WTC11 (cell line): ENCODE measurements at regions of chr5 and their contacts with region 1.

Region 1: DNA sequence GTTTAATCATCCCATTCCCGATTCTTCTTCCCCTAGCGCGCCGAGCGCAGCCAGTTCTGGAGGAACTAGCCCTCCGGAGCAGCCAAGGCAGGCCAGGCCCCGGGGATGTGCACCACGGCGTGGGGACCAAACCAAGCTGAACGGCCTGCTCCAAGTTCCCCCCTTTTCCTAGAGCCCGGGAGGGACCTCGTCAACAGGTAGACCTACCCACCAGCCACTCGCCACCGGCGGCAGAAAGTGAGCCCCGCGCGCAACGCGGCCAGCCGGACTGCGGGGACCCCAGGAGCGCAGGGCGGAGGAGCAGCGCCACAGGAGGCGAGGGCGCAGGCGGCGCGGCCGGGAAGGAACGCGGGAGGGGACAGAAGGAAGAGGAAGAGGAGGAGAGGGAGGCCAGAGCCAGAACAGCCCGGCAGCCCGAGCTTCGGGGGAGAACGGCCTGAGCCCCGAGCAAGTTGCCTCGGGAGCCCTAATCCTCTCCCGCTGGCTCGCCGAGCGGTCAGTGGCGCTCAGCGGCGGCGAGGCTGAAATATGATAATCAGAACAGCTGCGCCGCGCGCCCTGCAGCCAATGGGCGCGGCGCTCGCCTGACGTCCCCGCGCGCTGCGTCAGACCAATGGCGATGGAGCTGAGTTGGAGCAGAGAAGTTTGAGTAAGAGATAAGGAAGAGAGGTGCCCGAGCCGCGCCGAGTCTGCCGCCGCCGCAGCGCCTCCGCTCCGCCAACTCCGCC is at the start of gene ISL1:
- DNase-seq: peak; percentile 88
- ATAC-seq: peak; percentile 79
- H3K4me3 Mint-ChIP-seq: peak within 1 kb of the TSS; percentile 78
- H3K27ac Mint-ChIP-seq: peak within 1 kb of the TSS; percentile 5; the same call in 1 of the 2 replicates
- H3K4me1 Mint-ChIP-seq: peaks cover 87% of the 10 kb centered on the region
- H3K27me3 Mint-ChIP-seq: peaks cover 100% of the 10 kb centered on the region
- CTCF ChIP-seq: no peak
- total RNA-seq, gene ISL1: 0.07 to 0.18 TPM in 2 of 3 replicates, not detected in the other

Region 2: DNA sequence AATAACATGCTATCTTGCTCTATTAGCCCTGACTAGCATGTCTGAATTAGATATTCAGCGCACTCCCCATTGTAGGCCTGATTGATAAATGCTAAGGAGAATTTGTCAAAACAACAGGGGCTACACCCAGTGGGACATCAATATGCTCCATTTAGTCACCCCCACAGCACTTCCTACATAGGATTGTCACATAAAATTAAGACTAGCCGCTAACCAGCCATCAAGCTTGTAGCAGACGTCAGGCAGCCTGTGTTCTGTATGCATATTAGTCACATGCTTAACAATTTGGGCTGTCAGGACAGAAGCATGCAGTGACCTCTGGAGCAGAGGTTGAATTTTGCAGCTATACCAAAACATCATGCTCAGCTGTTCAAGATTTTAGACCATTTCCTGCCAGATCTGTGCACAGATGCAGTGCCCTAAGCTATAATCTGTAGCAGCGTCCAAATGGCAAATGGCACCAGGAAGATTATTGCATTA is 197.0 kb before region 1 on chr5:
- CTCF ChIA-PET with region 1: no interaction called
- POLR2A ChIA-PET with region 1: no interaction called
- DNase-seq: no peak
- ATAC-seq: peak; percentile 24; the same call in 1 of the 2 replicates
- H3K4me3 Mint-ChIP-seq: no peak overlapping the region
- H3K27ac Mint-ChIP-seq: no peak overlapping the region
- H3K4me1 Mint-ChIP-seq: peaks cover 39% of the 10 kb centered on the region
- H3K27me3 Mint-ChIP-seq: no peaks in the 10 kb centered on the region
- CTCF ChIP-seq: no peak

Region 3: DNA sequence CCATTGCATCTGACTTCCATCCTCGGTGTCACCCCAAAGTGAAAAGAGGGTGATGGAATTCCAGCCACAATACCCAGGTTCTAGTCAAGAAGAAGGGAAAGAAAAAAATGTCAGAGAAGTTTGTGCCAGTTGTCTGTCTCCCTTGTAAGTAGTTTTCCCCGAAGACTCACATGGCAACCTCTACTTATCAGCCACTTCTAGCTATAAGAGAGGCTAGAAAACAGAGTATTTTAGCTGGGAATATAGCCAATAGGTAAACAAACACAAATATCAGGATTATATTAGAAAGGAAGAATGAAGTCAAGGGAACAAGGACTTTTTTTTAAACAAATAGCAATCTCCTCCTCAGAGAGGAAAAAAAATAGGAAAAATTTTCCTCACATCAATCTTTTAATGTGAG is 11.9 kb before region 1 on chr5:
- CTCF ChIA-PET with region 1: no interaction called
- POLR2A ChIA-PET with region 1: no interaction called
- DNase-seq: no peak
- ATAC-seq: no peak
- H3K4me3 Mint-ChIP-seq: no peak overlapping the region
- H3K27ac Mint-ChIP-seq: no peak overlapping the region
- H3K4me1 Mint-ChIP-seq: peaks cover 7% of the 10 kb centered on the region; the same call in 1 of the 2 replicates
- H3K27me3 Mint-ChIP-seq: peaks cover 49% of the 10 kb centered on the region
- CTCF ChIP-seq: no peak

Region 4: DNA sequence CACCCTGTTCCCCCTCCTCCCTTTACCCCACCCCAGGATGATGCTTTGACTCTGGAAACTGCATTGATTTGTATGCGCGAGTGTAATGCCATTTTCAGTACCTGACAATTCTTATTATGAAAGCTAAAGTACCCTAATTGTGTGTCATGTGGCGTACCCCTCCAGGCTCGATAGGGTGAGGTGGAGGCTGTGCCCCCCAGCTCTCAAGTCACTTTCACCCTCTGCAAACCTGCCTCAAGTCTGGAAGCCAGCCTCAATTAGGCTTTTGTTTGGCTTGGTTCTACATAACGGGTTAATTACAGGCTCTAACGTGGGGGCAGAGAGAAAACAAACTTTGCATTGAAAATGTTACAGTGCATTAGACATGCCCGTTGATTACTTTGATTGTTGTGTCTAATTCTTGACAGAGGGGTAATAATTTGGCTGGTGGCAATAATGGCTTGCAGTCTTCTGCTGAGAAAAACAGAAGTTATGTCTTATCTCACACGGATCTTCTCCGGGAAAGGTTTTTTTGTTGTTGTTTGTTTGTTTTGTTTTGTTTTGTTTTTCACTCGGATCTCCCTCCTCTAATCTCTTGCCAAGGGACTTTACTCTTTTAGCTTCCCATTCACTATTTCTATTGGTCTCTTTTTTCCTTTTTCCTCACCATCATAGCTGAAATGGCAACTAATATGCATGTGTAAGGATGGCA is 12.9 kb after region 1 on chr5:
- CTCF ChIA-PET with region 1: interaction called, 10 read pairs
- POLR2A ChIA-PET with region 1: interaction called, 4 read pairs
- DNase-seq: no peak
- ATAC-seq: no peak
- H3K4me3 Mint-ChIP-seq: no peak overlapping the region
- H3K27ac Mint-ChIP-seq: no peak overlapping the region
- H3K4me1 Mint-ChIP-seq: peaks cover 85% of the 10 kb centered on the region
- H3K27me3 Mint-ChIP-seq: peaks cover 100% of the 10 kb centered on the region
- CTCF ChIP-seq: no peak